Motor neuron (in vitro differentiated cells): ENCODE measurements at regions of chr6 and their contacts with region 1.

Region 1: GRCh38 chr6:47787620-47788497 is 6.0 kb downstream of the OPN5 start:
- ATAC-seq: peak; percentile 81 to 95 (median 86)
- H3K4me3 ChIP-seq: no peak overlapping the region
- H3K27ac ChIP-seq: no peak overlapping the region
- H3K4me1 ChIP-seq: peaks cover 0 to 2% of the 10 kb centered on the region in 2 donors

Region 2: DNA sequence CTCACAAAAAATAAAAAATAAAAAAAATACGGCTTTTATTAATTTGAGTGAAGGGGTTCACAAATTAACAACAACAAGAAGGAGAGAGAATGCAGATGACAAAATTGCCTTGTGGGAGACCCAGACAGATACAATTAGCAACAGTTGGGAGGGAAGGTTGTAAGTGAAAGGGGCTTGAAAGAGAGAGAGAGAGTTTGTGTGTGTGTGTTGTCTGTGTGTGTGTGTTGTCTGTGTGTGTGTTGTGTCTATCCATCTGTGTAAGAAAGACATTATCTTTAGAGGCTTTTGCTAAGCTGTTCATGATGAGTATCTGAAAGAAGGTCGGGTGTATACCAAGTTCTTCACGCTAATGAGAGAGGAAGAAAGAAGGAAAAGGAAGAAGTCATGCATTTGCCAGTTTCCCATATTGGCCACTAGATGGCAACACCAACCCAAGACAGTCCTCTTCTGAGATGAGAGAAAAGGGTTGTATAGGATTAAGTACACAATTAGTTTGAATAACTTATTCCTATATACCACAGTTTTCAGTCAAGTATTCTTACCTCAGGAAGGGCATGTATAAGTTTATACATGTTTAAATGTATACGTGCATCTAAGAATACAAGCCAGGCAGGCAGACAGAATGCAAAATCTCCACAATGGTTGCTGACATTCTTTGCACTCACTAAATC is 374.0 kb before region 1 on chr6:
- in situ Hi-C with region 1: loop called in 1 of 9 experiments (anchors 25 kb)
- ATAC-seq: peak; percentile 52 to 94 (median 73)
- H3K4me3 ChIP-seq: no peak overlapping the region
- H3K27ac ChIP-seq: no peak overlapping the region
- H3K4me1 ChIP-seq: no peaks in the 10 kb centered on the region

Region 3: GRCh38 chr6:47631269-47631772 is 156.5 kb before region 1 on chr6:
- in situ Hi-C with region 1: loop called in 1 of 9 experiments (anchors 10 kb)
- ATAC-seq: peak in 3 of 8 experiments; percentile 5 to 9 (median 7)
- H3K4me3 ChIP-seq: no peak overlapping the region
- H3K27ac ChIP-seq: no peak overlapping the region
- H3K4me1 ChIP-seq: no peaks in the 10 kb centered on the region

Region 4: DNA sequence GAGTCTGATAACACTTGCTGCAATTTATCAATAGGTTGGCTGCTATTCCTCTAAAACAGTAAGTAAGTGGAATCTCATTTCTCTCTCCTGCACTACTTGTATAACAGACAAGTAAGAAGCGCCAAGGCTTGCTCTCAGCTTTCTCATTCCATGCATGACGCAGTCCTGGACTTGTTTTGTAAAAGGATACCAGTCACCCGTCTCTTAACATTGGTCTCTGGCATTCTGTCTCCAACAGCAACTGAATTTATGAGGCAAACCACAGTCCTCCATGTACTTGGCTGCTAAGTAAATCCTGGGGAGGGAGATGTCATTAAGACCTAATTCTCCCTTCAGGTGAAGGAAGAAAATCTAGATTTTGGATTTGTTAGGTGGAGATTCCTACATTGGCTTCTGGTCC is 109.4 kb after region 1 on chr6:
- in situ Hi-C with region 1: no loop called
- ATAC-seq: peak in 4 of 8 experiments; percentile 25 to 97 (median 60)
- H3K4me3 ChIP-seq: no peak overlapping the region
- H3K27ac ChIP-seq: no peak overlapping the region
- H3K4me1 ChIP-seq: no peaks in the 10 kb centered on the region

Region 5: GRCh38 chr6:48765352-48765961 is 977.6 kb after region 1 on chr6:
- in situ Hi-C with region 1: loop called in 7 of 9 experiments (anchors 10 to 25 kb)
- ATAC-seq: peak; percentile 52 to 90 (median 73)
- H3K4me3 ChIP-seq: no peak overlapping the region
- H3K27ac ChIP-seq: no peak overlapping the region
- H3K4me1 ChIP-seq: no peaks in the 10 kb centered on the region